ENCODE measurements at regions of chr16 and their contacts with region 1.

Region 1: DNA sequence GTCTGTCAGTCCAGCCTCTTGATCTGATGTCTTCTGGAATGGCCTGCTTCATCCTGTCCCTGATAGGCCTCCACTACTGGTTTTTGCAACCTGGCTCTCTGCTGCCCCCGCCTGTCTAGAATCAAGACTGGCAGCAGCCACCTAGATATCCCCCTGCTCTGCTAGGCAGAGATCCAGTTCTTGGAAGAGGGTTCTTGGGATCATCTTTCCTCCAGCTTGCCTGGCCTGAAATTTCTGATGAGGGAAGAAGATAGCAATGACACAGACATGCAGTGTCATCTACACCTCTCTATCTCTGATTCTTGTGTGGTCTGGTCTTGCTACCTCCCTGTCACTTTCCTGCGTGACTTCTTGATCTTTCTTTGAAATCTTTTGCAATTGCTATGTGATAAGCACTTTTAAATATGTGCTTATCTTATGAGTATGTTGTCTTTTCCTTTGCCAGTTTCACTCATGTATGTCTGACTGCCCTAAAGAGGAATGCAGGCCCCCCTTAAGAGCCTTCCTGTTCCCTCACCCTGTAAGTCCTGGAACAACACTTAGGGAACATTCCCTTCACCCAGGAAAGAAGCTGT is 20.3 kb upstream of the NFATC3 start:
- DNase-seq: peak; percentile 88
- H3K4me3 Mint-ChIP-seq: no peak overlapping the region
- H3K27ac Mint-ChIP-seq: no peak overlapping the region
- H3K4me1 Mint-ChIP-seq: peaks cover 61% of the 10 kb centered on the region
- H3K27me3 Mint-ChIP-seq: no peaks in the 10 kb centered on the region

Region 2: DNA sequence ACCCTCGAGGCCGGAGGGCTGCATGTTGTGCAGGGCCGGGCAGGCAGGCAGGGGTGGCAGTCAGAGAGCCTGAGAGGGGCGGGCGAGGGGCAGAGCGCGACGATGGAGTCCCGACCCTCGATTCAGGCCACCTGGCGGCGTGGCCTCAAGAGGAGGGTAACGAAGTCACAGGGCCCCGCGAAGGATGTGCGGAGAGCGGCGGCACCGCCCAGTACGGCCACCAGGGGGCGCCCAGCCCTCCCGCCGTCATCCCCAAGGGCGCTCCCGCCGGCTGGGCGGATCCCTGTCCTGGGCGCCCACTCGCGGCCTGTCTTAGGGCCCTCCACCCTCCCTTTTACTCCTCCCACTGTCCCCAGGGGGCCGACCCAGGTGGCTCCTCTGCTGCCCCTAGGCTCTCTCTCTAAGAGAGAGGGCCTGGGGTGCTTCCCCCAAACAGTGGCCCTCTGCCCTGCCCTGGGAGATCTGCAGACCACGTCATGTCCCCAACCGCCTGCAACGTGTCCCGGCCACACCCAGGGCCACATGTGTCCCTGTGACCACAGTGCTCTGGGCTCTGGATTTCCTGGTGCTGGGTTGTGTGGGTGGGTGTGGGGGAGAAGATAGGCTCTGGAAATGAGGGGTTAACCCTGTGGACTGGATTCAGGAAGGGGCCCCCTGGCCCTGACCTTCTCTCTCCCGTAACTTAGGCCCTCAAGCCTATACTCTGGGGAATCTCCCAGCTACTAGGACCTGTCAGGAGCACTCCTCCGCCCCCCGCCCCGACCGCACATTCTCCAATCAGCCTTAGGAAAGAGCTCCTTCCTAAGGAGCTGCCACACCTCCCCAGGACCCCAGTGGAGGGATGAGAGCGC is 71.5 kb before region 1 on chr16:
- CTCF ChIA-PET with region 1: no interaction called
- intact Hi-C with region 1: loop called (anchors 1 kb)
- DNase-seq: peak; percentile 83
- H3K4me3 Mint-ChIP-seq: peak overlapping the region; percentile 80
- H3K27ac Mint-ChIP-seq: peak overlapping the region; percentile 92
- H3K4me1 Mint-ChIP-seq: peaks cover 37% of the 10 kb centered on the region
- H3K27me3 Mint-ChIP-seq: no peaks in the 10 kb centered on the region

Region 3: DNA sequence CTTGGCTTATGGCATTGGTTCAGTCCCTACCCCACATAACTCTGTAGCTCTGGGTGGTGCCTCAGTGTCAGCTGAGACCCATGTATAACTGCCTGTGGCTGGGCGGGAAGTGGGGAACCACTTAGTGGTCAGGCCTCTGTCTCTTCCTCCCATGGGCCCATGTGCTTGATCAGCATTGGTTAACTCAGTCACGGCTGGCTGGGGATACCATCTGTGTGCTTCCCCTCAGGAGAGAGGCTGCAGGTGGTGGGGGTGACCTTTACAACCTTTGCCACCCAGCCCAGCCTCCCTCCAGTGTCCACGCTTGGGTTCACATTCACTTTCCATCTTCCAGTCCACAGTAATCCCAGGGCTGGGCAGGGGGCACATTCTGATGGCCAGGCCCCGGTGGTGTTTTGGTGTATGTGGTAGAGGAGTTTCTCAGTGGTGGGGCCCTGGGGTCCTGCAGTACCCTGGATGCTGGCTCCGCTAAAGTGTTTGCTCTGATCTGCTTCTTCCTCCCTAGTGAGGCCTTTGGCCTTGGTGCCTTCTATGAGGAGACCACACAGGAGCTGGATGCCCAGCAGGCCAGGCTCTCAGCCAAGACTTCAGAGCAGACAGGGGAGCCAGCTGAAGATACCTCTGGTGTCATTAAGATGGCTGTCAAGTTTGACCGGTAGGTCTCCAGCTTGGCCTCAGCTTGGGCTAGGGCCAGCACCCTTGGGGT is 10.1 kb after region 1 on chr16:
- CTCF ChIA-PET with region 1: interaction called, 14 read pairs
- intact Hi-C with region 1: loop called (anchors 1 kb)
- DNase-seq: peak; percentile 62
- H3K4me3 Mint-ChIP-seq: no peak overlapping the region
- H3K27ac Mint-ChIP-seq: no peak overlapping the region
- H3K4me1 Mint-ChIP-seq: peaks cover 70% of the 10 kb centered on the region
- H3K27me3 Mint-ChIP-seq: no peaks in the 10 kb centered on the region

Measured in activated naive CD4-positive, alpha-beta T cell treated with anti-CD3 and anti-CD28 coated beads for 36 hours (primary cell).